Common myeloid progenitor, CD34-positive (primary cell): ENCODE measurements at regions of chr1 and their contacts with region 1.

Region 1: GRCh38 chr1:147124266-147124665 is 48.0 kb downstream of the PRKAB2 start:
- DNase-seq: peak in 2 of 3 donors; percentile 6 to 35
- H3K4me3 ChIP-seq: no peak overlapping the region
- H3K27ac ChIP-seq: no peak overlapping the region
- H3K4me1 ChIP-seq: no peaks in the 10 kb centered on the region
- H3K27me3 ChIP-seq: peaks cover 0 to 3% (median 0%) of the 10 kb centered on the region in 5 experiments

Region 2: GRCh38 chr1:147084273-147085096 is 39.8 kb before region 1 on chr1:
- CTCF ChIA-PET with region 1: no interaction called
- POLR2A ChIA-PET with region 1: interaction called, 10 read pairs
- DNase-seq: peak; percentile 92 to 95 (median 93)
- H3K4me3 ChIP-seq: peak overlapping the region; percentile 24 to 91 (median 68)
- H3K27ac ChIP-seq: peak overlapping the region; percentile 86 to 96
- H3K4me1 ChIP-seq: peaks cover 0 to 36% (median 28%) of the 10 kb centered on the region in 4 experiments
- H3K27me3 ChIP-seq: peaks cover 0 to 67% (median 0%) of the 10 kb centered on the region in 5 experiments

Region 3: DNA sequence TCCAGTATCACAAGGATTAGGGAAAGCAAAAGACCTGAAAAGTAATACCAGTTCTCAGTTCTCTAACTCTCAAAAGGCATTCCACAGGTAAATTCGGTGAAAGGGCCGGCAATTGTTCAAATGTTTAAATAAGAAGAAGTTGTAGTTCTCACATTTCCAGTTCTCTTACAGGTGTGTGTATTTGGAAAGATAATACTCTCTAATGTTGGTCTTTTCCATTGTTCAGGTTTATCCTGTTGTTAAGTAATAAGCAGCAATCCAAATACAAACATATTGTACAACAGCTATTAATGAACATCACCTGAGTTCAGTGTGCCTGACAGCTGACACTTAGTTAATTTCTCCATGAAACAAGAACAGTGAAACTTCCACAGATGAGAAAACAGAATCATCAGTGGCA is 61.2 kb after region 1 on chr1:
- CTCF ChIA-PET with region 1: no interaction called
- POLR2A ChIA-PET with region 1: no interaction called
- DNase-seq: no peak
- H3K4me3 ChIP-seq: no peak overlapping the region
- H3K27ac ChIP-seq: no peak overlapping the region
- H3K4me1 ChIP-seq: no peaks in the 10 kb centered on the region
- H3K27me3 ChIP-seq: no peaks in the 10 kb centered on the region